ENCODE measurements at regions of chr12 and their contacts with region 1.

Region 1: DNA sequence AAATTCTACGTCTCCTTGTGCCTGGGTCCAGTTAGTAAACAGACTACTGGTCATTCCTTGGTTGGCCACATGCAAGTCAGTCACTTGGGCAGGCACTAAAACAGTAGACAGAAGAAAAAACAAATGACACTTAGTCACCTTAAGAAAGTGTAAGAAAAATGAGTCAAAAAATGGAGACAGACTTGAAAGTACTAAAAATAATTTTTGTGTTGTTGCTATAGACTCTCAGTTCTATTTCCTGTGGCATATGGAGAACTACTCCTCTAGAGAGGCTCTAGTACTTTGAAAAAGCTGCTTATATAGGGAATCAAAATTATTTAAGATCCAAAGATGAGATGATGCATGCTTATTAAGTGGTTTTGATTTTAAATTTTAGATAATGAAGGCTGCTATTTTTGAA is 56.0 kb downstream of the PTPRB start:
- DNase-seq: no peak
- H3K4me3 ChIP-seq: no peak overlapping the region
- H3K27ac ChIP-seq: no peak overlapping the region
- H3K4me1 ChIP-seq: no peaks in the 10 kb centered on the region
- H3K27me3 ChIP-seq: no peaks in the 10 kb centered on the region
- CTCF ChIP-seq: no peak
- EP300 ChIP-seq: no peak
- POLR2A ChIP-seq: no peak

Region 2: DNA sequence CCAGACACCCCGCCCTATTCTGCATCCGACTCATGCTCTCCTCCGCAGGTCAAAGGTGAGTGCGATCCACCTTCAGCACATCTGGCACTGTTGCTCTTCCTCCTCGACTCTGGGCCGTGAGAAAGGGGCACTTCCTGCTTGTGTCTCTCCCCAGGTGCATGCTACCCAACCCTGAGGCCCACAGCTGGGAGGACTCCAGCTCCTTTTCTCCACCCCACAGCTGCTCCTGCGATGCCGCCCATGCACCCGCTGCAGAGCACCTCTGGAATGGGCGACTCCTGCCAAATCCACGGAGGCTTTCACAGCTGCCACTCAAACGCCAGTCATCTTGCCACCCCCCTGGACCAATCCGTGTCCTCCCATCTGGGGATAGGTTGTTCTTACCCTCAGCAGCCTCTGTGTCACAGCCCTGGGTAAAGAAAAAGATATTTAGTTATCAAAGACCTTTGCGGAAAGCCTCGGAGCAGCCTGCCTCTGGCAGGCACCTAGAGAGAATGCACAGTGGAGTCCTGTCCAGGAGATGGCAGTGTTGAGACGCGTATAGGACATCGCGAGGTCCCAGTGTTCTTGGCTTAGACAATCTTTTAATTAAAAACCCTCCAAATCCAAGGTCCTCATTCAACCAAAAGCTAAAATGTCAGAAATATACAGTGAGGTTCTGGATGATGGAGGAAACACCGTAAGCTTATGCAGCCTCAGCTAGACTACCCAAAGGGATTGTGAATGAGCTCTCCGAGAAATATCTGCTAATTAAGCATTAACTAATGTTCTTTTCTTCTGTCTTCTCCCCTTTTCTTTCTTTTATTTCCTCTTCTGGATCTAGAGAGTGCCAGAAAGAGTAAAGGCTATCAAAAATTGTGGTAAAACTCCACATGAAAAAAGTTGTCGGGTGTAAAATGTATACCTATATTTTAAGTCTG is 701.9 kb before region 1 on chr12:
- intact Hi-C with region 1: loop called (anchors 5 kb)
- DNase-seq: peak; percentile 75 to 91
- H3K4me3 ChIP-seq: peak overlapping the region in 2 of 4 donors; percentile 9 to 11
- H3K27ac ChIP-seq: no peak overlapping the region
- H3K4me1 ChIP-seq: peaks cover 0 to 11% (median 6%) of the 10 kb centered on the region in 4 donors
- H3K27me3 ChIP-seq: peaks cover 0 to 15% (median 5%) of the 10 kb centered on the region in 3 donors
- CTCF ChIP-seq: peak in 5 of 7 experiments; percentile 52 to 85 (median 77)
- EP300 ChIP-seq: no peak
- POLR2A ChIP-seq: no peak

Region 3: DNA sequence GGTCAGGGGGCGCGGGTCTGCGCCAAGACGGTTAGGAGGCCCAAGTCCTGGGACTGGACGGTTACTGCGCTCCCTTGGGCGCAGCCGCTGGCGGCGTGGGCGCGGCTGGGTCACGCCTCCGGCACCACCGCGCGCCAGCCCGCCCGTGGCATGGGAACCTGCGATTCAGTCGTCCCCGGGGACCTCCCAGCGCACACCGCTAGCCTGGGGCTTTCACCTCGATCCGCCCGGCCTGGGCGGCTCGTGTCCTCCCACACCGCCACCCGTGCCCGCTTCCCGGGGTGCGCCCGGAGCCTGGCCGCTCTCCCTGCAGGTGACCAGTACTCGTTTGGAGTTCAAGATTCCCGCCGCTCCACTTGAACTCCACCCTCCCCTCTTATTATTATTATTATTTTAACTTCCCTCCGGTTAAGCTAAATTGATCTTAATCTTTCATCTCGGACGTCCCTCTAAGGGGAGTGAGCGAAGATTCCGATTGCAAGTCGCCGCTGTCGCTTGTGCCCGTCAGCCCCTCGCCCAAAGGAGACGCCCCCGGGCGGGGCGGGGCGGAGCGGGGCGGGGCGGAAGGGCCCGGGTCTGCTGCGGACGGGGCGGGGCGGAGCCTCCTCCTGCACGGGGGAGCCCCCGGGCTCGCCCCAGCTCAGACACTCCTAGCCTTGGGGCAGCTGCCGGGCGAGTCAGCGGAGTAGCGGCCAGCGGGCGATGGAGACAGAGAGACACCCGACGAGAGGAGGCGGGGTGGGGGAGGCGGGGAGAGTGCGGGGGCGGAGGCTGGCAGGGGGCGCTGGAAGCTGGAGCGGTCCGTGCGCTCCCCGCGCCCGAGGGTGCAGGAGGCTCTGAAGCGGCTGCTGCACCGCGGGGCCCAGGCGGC is 215.3 kb before region 1 on chr12 and contains the start of gene KCNMB4:
- intact Hi-C with region 1: no loop called
- DNase-seq: peak; percentile 49 to 93
- H3K4me3 ChIP-seq: peak within 1 kb of the TSS; percentile 66 to 91 (median 78)
- H3K27ac ChIP-seq: peak within 1 kb of the TSS in 3 of 5 donors; percentile 8 to 67 (median 62)
- H3K4me1 ChIP-seq: peaks cover 14 to 27% (median 25%) of the 10 kb centered on the region in 4 donors
- H3K27me3 ChIP-seq: peaks cover 0 to 40% (median 21%) of the 10 kb centered on the region in 3 donors
- CTCF ChIP-seq: no peak
- EP300 ChIP-seq: no peak
- POLR2A ChIP-seq: no peak
- total RNA-seq, gene KCNMB4: under 0.01 to 6.2 (median 2.9) TPM in 3 of 5 donors, not detected in the others

Region 4: DNA sequence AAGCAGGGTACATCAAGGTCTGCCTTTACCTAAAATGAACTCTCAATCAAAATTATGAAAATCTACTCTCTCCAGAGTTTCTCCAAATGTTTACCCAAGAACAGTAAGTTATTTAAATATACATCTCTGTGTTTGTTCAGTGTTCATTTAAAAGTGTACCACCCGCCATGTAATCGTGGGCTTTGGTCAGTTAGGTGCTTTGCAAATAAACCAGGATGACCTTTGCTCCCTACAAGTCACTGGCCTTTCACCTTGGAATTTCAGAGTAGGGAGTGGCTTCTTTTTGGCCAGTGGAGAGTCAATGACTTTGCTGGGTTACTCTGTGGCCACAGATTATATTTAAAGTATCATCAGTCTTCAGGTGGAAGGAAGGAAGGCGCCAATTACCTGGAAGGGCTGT is 130.6 kb after region 1 on chr12:
- intact Hi-C with region 1: no loop called
- DNase-seq: peak in 1 of 2 donors; percentile 8
- H3K4me3 ChIP-seq: no peak overlapping the region
- H3K27ac ChIP-seq: no peak overlapping the region
- H3K4me1 ChIP-seq: peaks cover 0 to 5% (median 0%) of the 10 kb centered on the region in 4 donors
- H3K27me3 ChIP-seq: peaks cover 0 to 16% (median 0%) of the 10 kb centered on the region in 3 donors
- CTCF ChIP-seq: no peak
- EP300 ChIP-seq: no peak
- POLR2A ChIP-seq: no peak